Naive thymus-derived CD4-positive, alpha-beta T cell (primary cell): ENCODE measurements at regions of chr17 and their contacts with region 1.

Region 1: DNA sequence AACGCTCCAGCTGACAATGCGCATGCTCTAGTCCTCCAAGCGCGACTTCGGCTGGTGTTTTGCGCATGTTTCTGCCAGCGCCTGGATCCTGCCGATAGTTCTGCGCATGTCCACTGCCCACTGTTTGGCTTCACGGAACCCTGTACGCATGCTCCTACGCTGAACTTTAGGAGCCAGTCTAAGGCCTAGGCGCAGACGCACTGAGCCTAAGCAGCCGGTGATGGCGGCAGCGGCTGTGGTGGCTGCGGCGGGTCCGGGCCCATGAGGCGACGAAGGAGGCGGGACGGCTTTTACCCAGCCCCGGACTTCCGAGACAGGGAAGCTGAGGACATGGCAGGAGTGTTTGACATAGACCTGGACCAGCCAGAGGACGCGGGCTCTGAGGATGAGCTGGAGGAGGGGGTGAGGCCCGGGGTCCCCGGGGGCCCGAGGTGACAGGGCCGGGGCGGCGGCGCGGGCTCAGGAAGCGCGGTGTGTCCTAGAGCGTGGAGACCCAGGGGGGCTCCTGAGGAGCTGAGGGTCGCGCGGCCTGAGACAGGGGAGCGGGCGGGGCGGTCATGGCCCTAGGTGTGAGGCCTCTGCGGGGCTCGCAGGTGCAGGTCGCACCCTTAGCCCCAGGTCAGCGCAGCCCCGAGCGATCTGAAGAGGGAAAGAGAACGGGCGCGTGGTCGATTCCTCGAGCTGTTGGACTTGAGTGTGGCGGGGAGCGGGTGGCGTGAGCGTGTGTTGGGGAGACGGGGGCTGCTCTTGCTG is at the starts of genes RPS6KB1 and TUBD1:
- DNase-seq: peak; percentile 87 to 99 (median 98)
- ATAC-seq: peak; percentile 96
- H3K4me3 ChIP-seq: peak within 1 kb of the TSS; percentile 74
- H3K4me3 Mint-ChIP-seq: peak within 1 kb of the TSS; percentile 97 to 100 (median 99)
- H3K27ac ChIP-seq: peak within 1 kb of the TSS; percentile 93
- H3K27ac Mint-ChIP-seq: peak within 1 kb of the TSS; percentile 98 to 100 (median 100)
- H3K4me1 ChIP-seq: peaks cover 13 to 23% of the 10 kb centered on the region in 2 donors
- H3K4me1 Mint-ChIP-seq: peaks cover 43 to 83% (median 67%) of the 10 kb centered on the region in 7 donors
- H3K27me3 ChIP-seq: no peaks in the 10 kb centered on the region
- H3K27me3 Mint-ChIP-seq: peaks cover 0 to 4% (median 0%) of the 10 kb centered on the region in 5 donors
- total RNA-seq, gene RPS6KB1: 62.0 to 107 (median 71.5) TPM
- total RNA-seq, gene TUBD1: 8.2 to 42.1 (median 14.3) TPM

Region 2: DNA sequence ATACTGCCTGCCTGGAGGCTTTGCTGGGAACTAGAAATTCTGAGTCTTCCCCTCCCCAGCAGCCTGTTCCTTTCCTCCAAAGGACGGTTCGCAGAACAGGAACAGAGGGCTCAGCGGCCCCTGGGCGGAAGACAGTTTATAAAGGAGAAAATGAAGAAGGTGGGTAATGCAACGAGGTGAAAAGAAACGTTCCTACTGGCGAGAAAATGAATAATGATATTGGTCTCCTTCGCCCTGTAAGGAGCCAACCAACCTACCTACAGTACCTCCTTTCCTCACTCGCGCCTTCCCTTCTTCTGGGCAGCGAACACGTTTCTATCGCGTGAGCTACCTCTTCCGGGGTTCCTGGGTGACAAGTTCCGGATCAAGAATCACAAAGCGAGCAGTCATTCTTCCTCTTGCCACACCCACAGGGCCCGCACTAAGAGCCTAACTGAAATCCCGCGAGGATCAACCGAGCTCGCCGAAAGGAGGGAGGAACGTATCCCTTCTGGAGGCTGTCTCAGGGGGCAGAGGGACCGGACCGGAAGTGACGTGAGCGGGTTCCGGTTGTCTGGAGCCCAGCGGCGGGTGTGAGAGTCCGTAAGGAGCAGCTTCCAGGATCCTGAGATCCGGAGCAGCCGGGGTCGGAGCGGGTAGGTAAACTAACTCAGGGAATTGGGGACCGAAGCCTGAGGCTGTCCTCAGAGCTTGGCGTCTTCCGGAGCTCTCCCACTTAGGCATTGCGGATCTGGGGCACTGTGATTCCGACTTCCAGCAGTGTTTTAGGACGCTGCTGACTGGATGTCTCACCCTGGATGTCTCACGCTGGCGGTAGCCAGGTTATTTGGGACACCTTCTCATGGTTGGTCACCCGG is 185.8 kb before region 1 on chr17 and contains the starts of genes PTRH2 and VMP1:
- CTCF ChIA-PET with region 1: no interaction called
- POLR2A ChIA-PET with region 1: interaction called, 5 read pairs
- intact Hi-C with region 1: loop called (anchors 1 kb)
- DNase-seq: peak; percentile 72 to 94 (median 83)
- ATAC-seq: peak; percentile 96
- H3K4me3 ChIP-seq: peak within 1 kb of the TSS; percentile 90
- H3K4me3 Mint-ChIP-seq: peak within 1 kb of the TSS; percentile 97 to 100 (median 99)
- H3K27ac ChIP-seq: peak within 1 kb of the TSS; percentile 90
- H3K27ac Mint-ChIP-seq: peak within 1 kb of the TSS; percentile 96 to 100 (median 99)
- H3K4me1 ChIP-seq: peaks cover 26 to 28% of the 10 kb centered on the region in 2 donors
- H3K4me1 Mint-ChIP-seq: peaks cover 39 to 86% (median 68%) of the 10 kb centered on the region in 7 donors
- H3K27me3 ChIP-seq: no peaks in the 10 kb centered on the region
- H3K27me3 Mint-ChIP-seq: no peaks in the 10 kb centered on the region
- total RNA-seq, gene PTRH2: 6.1 to 24.1 (median 15.0) TPM
- total RNA-seq, gene VMP1: 70.3 to 370 (median 82.5) TPM

Region 3: GRCh38 chr17:59796785-59797205 is 96.3 kb before region 1 on chr17:
- CTCF ChIA-PET with region 1: no interaction called
- POLR2A ChIA-PET with region 1: no interaction called
- intact Hi-C with region 1: no loop called
- DNase-seq: no peak
- ATAC-seq: no peak
- H3K4me3 ChIP-seq: no peak overlapping the region
- H3K4me3 Mint-ChIP-seq: no peak overlapping the region
- H3K27ac ChIP-seq: no peak overlapping the region
- H3K27ac Mint-ChIP-seq: peak overlapping the region in 2 of 9 donors; percentile 23 to 24
- H3K4me1 ChIP-seq: no peaks in the 10 kb centered on the region
- H3K4me1 Mint-ChIP-seq: peaks cover 0 to 40% (median 0%) of the 10 kb centered on the region in 7 donors
- H3K27me3 ChIP-seq: no peaks in the 10 kb centered on the region
- H3K27me3 Mint-ChIP-seq: no peaks in the 10 kb centered on the region

Region 4: DNA sequence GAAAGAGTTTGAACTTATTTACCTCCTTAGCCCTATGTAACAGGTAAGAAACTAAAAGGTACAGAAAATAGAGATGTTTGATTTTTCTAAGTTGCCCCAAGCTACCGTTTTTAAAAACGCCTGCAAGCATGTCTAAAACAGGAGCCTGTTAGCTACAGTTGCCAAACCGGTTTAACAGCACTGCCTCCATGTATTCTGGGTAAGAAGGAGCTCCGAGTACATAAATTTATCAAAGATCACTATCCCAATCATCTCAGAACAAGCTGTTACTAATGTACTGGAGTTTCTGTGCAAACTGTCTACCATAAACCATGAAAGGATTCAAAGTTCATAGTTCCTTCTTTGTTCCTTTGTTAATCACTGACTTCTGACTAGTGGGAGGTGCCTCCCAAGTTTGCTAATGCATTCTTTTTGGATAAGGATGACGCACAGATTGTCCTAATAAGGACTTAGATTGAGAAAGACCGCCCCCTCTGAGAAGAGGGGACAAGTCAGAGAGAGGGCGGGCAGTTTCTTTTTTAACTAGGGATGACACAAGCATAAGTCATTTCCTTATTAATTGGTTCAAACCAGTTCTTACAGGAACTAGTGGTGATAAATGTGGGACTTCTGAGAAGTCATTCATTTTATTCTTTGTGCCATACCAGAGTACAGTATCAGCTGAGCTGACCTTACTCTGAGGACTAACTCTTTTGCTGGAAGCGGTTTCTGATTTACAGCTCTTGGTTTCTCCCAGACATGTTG is 55.6 kb before region 1 on chr17:
- CTCF ChIA-PET with region 1: no interaction called
- POLR2A ChIA-PET with region 1: interaction called, 3 read pairs
- intact Hi-C with region 1: loop called in 1 of 2 experiments (anchors 1 kb)
- DNase-seq: peak in 8 of 9 donors; percentile 51 to 91 (median 74)
- ATAC-seq: peak; percentile 94
- H3K4me3 ChIP-seq: peak overlapping the region; percentile 72
- H3K4me3 Mint-ChIP-seq: peak overlapping the region; percentile 83 to 100 (median 95)
- H3K27ac ChIP-seq: peak overlapping the region; percentile 88
- H3K27ac Mint-ChIP-seq: peak overlapping the region; percentile 90 to 99 (median 96)
- H3K4me1 ChIP-seq: peaks cover 6 to 14% of the 10 kb centered on the region in 2 donors
- H3K4me1 Mint-ChIP-seq: peaks cover 14 to 69% (median 49%) of the 10 kb centered on the region in 7 donors
- H3K27me3 ChIP-seq: no peaks in the 10 kb centered on the region
- H3K27me3 Mint-ChIP-seq: peaks cover 0 to 17% (median 0%) of the 10 kb centered on the region in 5 donors

Region 5: GRCh38 chr17:59846394-59847165 is 46.5 kb before region 1 on chr17:
- CTCF ChIA-PET with region 1: no interaction called
- POLR2A ChIA-PET with region 1: no interaction called
- intact Hi-C with region 1: loop called in 1 of 2 experiments (anchors 2 kb)
- DNase-seq: peak in 1 of 9 donors; percentile 34
- ATAC-seq: peak; percentile 58
- H3K4me3 ChIP-seq: no peak overlapping the region
- H3K4me3 Mint-ChIP-seq: peak overlapping the region in 6 of 10 donors; percentile 4 to 76 (median 25)
- H3K27ac ChIP-seq: peak overlapping the region; percentile 60
- H3K27ac Mint-ChIP-seq: peak overlapping the region in 8 of 9 donors; percentile 7 to 91 (median 65)
- H3K4me1 ChIP-seq: peaks cover 16 to 19% of the 10 kb centered on the region in 2 donors
- H3K4me1 Mint-ChIP-seq: peaks cover 23 to 65% (median 49%) of the 10 kb centered on the region in 7 donors
- H3K27me3 ChIP-seq: no peaks in the 10 kb centered on the region
- H3K27me3 Mint-ChIP-seq: peaks cover 0 to 3% (median 0%) of the 10 kb centered on the region in 5 donors

Region 6: GRCh38 chr17:59941131-59941530 is 48.0 kb after region 1 on chr17:
- CTCF ChIA-PET with region 1: no interaction called
- POLR2A ChIA-PET with region 1: no interaction called
- intact Hi-C with region 1: no loop called
- DNase-seq: no peak
- ATAC-seq: no peak
- H3K4me3 ChIP-seq: no peak overlapping the region
- H3K4me3 Mint-ChIP-seq: no peak overlapping the region
- H3K27ac ChIP-seq: no peak overlapping the region
- H3K27ac Mint-ChIP-seq: peak overlapping the region in 2 of 9 donors; percentile 38 to 42
- H3K4me1 ChIP-seq: no peaks in the 10 kb centered on the region
- H3K4me1 Mint-ChIP-seq: peaks cover 0 to 27% (median 0%) of the 10 kb centered on the region in 7 donors
- H3K27me3 ChIP-seq: no peaks in the 10 kb centered on the region
- H3K27me3 Mint-ChIP-seq: no peaks in the 10 kb centered on the region

Region 7: DNA sequence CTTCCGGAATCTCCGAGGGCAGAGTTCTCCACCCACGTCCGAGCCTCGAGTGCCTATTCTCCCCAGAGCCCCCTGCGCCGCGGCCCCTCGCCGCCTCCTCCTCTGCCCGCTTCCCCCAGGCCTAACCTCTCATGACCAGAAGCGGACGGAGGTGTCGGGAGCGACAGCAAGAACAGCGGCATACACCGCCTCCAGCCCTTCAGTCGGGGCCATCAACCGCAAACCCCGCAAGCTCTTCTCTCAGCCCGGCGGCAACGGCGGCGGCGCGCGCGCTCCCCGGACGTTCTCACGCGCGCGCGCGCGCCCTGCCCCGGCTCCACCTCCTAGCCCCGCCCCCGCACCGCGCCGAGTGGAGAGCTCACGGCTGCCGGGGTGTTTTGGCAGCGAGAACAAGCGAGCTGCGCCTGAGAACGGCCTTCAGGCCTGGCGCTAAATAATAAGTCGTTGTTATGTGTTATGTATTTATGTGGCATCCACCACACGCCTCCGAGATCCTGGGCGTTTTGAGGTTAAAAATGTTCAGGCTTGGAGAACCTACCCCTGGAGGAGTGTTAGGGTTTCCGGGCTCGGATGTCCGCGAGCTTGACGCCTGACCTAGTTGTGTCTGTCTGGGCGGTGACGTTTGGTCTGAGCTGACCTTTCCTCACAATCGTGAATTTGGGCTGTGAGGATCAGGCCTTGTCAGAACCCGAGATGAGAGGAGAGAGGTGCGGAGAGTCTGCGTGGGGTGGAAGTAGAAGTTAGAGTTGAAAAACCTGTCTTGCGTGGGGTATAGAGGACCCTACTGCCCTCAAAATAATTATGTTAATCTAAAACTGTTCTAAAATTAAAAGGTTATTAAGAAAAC is 71.6 kb after region 1 on chr17 and contains the start of gene RNFT1:
- CTCF ChIA-PET with region 1: no interaction called
- POLR2A ChIA-PET with region 1: interaction called, 20 read pairs
- intact Hi-C with region 1: loop called (anchors 1 to 2 kb)
- DNase-seq: peak; percentile 78 to 97 (median 88)
- ATAC-seq: peak; percentile 97
- H3K4me3 ChIP-seq: peak within 1 kb of the TSS; percentile 92
- H3K4me3 Mint-ChIP-seq: peak within 1 kb of the TSS; percentile 86 to 99 (median 94)
- H3K27ac ChIP-seq: peak within 1 kb of the TSS; percentile 84
- H3K27ac Mint-ChIP-seq: peak within 1 kb of the TSS; percentile 88 to 99 (median 94)
- H3K4me1 ChIP-seq: peaks cover 16 to 18% of the 10 kb centered on the region in 2 donors
- H3K4me1 Mint-ChIP-seq: peaks cover 16 to 32% (median 23%) of the 10 kb centered on the region in 7 donors
- H3K27me3 ChIP-seq: no peaks in the 10 kb centered on the region
- H3K27me3 Mint-ChIP-seq: peaks cover 0 to 5% (median 0%) of the 10 kb centered on the region in 5 donors
- total RNA-seq, gene RNFT1: 22.8 to 45.8 (median 33.1) TPM

Region 8: DNA sequence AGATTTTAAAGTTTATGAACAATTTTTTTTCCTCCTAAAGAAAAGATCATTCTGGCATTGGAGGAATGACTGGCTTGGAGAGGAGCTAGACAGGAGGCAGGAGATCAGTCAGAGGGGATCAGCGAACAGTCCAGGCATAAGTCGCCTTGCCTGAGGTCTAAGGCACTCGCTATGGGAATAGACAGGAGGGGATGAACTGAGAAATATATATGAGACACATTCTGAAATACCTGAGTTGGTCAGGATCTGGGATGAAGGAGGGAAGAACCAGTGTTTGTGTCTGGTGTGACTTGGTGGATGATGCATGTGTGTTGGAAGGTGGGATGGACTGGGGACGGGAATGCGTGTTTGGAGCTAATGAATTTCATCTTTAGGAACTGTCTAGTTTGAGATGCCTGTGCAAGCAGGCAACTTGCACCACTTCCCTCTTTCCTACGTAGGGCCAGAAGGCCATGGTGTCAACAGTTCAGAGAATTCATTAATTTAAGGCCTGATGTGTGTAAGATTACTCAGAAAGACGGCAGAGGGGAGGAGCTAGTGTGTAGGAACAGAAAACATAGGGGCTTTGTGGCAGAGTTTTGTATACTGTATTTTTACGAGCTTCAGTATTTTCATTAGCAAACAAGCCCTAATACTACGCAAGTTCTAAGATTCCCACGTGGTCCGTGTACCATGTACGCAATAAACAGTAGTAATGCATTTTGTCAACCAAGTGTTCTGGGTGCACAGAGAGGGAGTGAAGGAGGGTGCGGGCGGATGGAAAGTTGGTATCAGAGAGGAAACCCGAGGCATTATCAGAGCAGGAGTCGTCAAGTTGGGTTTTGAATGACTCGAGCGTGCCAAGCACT is 184.8 kb after region 1 on chr17:
- CTCF ChIA-PET with region 1: no interaction called
- POLR2A ChIA-PET with region 1: no interaction called
- intact Hi-C with region 1: loop called in 1 of 2 experiments (anchors 2 kb)
- DNase-seq: peak in 5 of 9 donors; percentile 30 to 41 (median 35)
- ATAC-seq: peak; percentile 66
- H3K4me3 ChIP-seq: peak overlapping the region; percentile 82
- H3K4me3 Mint-ChIP-seq: peak overlapping the region; percentile 86 to 97 (median 94)
- H3K27ac ChIP-seq: peak overlapping the region; percentile 70
- H3K27ac Mint-ChIP-seq: peak overlapping the region; percentile 82 to 97 (median 87)
- H3K4me1 ChIP-seq: peaks cover 8 to 14% of the 10 kb centered on the region in 2 donors
- H3K4me1 Mint-ChIP-seq: peaks cover 17 to 41% (median 28%) of the 10 kb centered on the region in 7 donors
- H3K27me3 ChIP-seq: no peaks in the 10 kb centered on the region
- H3K27me3 Mint-ChIP-seq: no peaks in the 10 kb centered on the region